ENCODE measurements at regions of chr17 and their contacts with region 1.

Region 1: DNA sequence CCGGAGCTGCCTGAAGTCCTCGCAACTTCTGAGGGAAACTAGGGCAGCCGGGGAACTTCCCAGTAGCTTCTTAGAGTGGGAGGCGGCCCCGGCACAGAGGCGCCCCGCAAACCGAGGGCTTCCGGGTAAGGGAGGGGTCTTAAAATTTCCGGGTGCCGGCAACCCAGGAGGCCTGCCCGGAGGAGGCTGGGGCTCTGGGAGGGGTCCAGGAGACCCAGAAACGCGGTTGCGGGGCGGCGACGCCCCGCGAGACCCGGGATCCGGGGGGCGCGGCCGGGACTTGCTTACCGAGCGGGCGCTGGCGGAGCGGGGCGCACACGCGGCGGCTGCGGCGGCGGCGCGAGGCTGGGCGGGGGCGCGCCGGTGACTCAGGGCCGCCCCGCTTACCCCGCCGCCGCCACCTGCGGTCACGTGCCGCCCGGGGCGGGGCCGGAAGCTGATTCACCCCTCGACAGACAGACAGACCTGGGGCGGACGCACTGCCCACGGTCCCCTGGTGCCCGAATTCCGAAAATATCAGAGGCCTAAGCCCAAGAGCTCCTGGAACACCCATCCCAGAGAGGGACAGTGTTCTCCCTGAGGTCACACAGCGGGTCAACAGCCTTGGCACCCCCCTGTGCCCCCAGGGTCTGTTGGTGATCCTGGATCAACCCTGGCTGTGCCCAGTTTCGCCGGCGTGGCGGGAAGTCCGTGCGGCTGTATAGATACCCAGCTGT is at the start of gene FAM83G:
- DNase-seq: peak; percentile 94
- ATAC-seq: peak; percentile 87
- H3K4me3 Mint-ChIP-seq: peak within 1 kb of the TSS; percentile 88
- H3K27ac Mint-ChIP-seq: peak within 1 kb of the TSS; percentile 89
- H3K4me1 Mint-ChIP-seq: peaks cover 26% of the 10 kb centered on the region
- H3K27me3 Mint-ChIP-seq: no peaks in the 10 kb centered on the region
- total RNA-seq, gene FAM83G: 11.1 to 14.3 TPM

Region 2: GRCh38 chr17:18314731-18315561 is 689.6 kb before region 1 on chr17 and contains the starts of genes SMCR8 and TOP3A:
- CTCF ChIA-PET with region 1: no interaction called
- POLR2A ChIA-PET with region 1: no interaction called
- intact Hi-C with region 1: loop called in 1 of 2 experiments (anchors 1 kb)
- DNase-seq: peak; percentile 99
- ATAC-seq: peak; percentile 95
- H3K4me3 Mint-ChIP-seq: peak within 1 kb of the TSS; percentile 85
- H3K27ac Mint-ChIP-seq: peak within 1 kb of the TSS; percentile 100
- H3K4me1 Mint-ChIP-seq: peaks cover 71% of the 10 kb centered on the region
- H3K27me3 Mint-ChIP-seq: no peaks in the 10 kb centered on the region
- total RNA-seq, gene SMCR8: 13.2 to 14.5 TPM
- total RNA-seq, gene TOP3A: 44.1 to 57.9 TPM

Region 3: DNA sequence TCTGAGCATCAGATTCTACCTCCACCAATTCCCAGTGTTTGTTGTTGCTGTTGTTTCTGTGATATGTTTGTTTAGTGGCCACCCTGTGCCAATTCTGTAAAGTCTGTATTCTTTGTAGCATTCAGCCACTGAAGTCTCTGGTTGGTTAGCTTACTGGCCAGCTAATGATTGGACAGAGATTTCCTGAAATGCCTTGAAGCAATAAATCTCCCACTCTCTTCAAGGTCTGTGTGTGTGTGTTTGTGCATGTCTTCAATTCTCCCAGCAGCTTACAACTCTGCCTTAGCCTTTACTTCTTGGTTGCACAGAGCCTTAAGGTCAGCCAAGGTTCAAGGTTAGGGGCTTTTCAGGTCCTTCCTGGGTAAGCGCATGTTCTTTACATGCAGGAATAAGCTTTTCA is 108.4 kb before region 1 on chr17:
- CTCF ChIA-PET with region 1: no interaction called
- POLR2A ChIA-PET with region 1: no interaction called
- intact Hi-C with region 1: loop called in 1 of 2 experiments (anchors 1 kb)
- DNase-seq: no peak
- ATAC-seq: no peak
- H3K4me3 Mint-ChIP-seq: no peak overlapping the region
- H3K27ac Mint-ChIP-seq: peak overlapping the region; percentile 48
- H3K4me1 Mint-ChIP-seq: peaks cover 21% of the 10 kb centered on the region
- H3K27me3 Mint-ChIP-seq: no peaks in the 10 kb centered on the region

Region 4: GRCh38 chr17:18974407-18975132 is 30.0 kb before region 1 on chr17:
- CTCF ChIA-PET with region 1: interaction called, 3 read pairs
- POLR2A ChIA-PET with region 1: no interaction called
- intact Hi-C with region 1: loop called in 1 of 2 experiments (anchors 2 kb)
- DNase-seq: peak; percentile 67
- ATAC-seq: peak; percentile 84
- H3K4me3 Mint-ChIP-seq: no peak overlapping the region
- H3K27ac Mint-ChIP-seq: no peak overlapping the region
- H3K4me1 Mint-ChIP-seq: peaks cover 16% of the 10 kb centered on the region
- H3K27me3 Mint-ChIP-seq: no peaks in the 10 kb centered on the region

Region 5: GRCh38 chr17:19024101-19025078 is 19.8 kb after region 1 on chr17:
- CTCF ChIA-PET with region 1: interaction called, 3 read pairs
- POLR2A ChIA-PET with region 1: no interaction called
- intact Hi-C with region 1: loop called in 1 of 2 experiments (anchors 2 kb)
- DNase-seq: peak; percentile 42
- ATAC-seq: peak; percentile 80
- H3K4me3 Mint-ChIP-seq: peak overlapping the region; percentile 32
- H3K27ac Mint-ChIP-seq: peak overlapping the region; percentile 86
- H3K4me1 Mint-ChIP-seq: peaks cover 14% of the 10 kb centered on the region
- H3K27me3 Mint-ChIP-seq: no peaks in the 10 kb centered on the region

Region 6: GRCh38 chr17:19237389-19238166 is 233.0 kb after region 1 on chr17:
- CTCF ChIA-PET with region 1: no interaction called
- POLR2A ChIA-PET with region 1: no interaction called
- intact Hi-C with region 1: no loop called
- DNase-seq: peak; percentile 53
- ATAC-seq: peak; percentile 73
- H3K4me3 Mint-ChIP-seq: peak overlapping the region; percentile 79
- H3K27ac Mint-ChIP-seq: peak overlapping the region; percentile 42
- H3K4me1 Mint-ChIP-seq: peaks cover 4% of the 10 kb centered on the region
- H3K27me3 Mint-ChIP-seq: peaks cover 3% of the 10 kb centered on the region

Measured in activated CD4-positive, alpha-beta T cell treated with anti-CD3 and anti-CD28 coated beads for 36 hours (primary cell).